GM12878 (cell line): ENCODE measurements at regions of chrX and their contacts with region 1.

Region 1: GRCh38 chrX:132226169-132226568 is 6.9 kb upstream of the RAP2C start:
- DNase-seq: no peak
- ATAC-seq: no peak
- H3K4me3 ChIP-seq: no peak overlapping the region
- H3K27ac ChIP-seq: no peak overlapping the region
- H3K4me1 ChIP-seq: no peaks in the 10 kb centered on the region
- H3K27me3 ChIP-seq: no peaks in the 10 kb centered on the region
- CTCF ChIP-seq: peak in 1 of 3 experiments; percentile 37; a peak in 2 of 6 replicates
- EP300 ChIP-seq: no peak
- POLR2A ChIP-seq: no peak
- RAD21 ChIP-seq: peak; percentile 75

Region 2: GRCh38 chrX:131854581-131854980 is 371.6 kb before region 1 on chrX:
- CTCF ChIA-PET with region 1: interaction called, 25 read pairs
- POLR2A ChIA-PET with region 1: no interaction called
- RAD21 ChIA-PET with region 1: no interaction called
- SMC1A ChIA-PET with region 1: interaction called, 3 read pairs
- in situ Hi-C with region 1: loop called (anchors 10 kb)
- intact Hi-C with region 1: no loop called
- DNase-seq: no peak
- ATAC-seq: no peak
- H3K4me3 ChIP-seq: no peak overlapping the region
- H3K27ac ChIP-seq: no peak overlapping the region
- H3K4me1 ChIP-seq: no peaks in the 10 kb centered on the region
- H3K27me3 ChIP-seq: no peaks in the 10 kb centered on the region
- CTCF ChIP-seq: peak; percentile 6 to 31 (median 10); a peak in 2 of 6 replicates
- EP300 ChIP-seq: no peak
- POLR2A ChIP-seq: no peak
- RAD21 ChIP-seq: peak; percentile 51

Region 3: GRCh38 chrX:132333351-132333750 is 107.2 kb after region 1 on chrX:
- CTCF ChIA-PET with region 1: no interaction called
- POLR2A ChIA-PET with region 1: no interaction called
- RAD21 ChIA-PET with region 1: no interaction called
- SMC1A ChIA-PET with region 1: no interaction called
- in situ Hi-C with region 1: no loop called
- intact Hi-C with region 1: no loop called
- DNase-seq: no peak
- ATAC-seq: peak; percentile 66
- H3K4me3 ChIP-seq: no peak overlapping the region
- H3K27ac ChIP-seq: no peak overlapping the region; the same call in 1 of the 2 replicates
- H3K4me1 ChIP-seq: no peaks in the 10 kb centered on the region
- H3K27me3 ChIP-seq: no peaks in the 10 kb centered on the region
- CTCF ChIP-seq: no peak
- EP300 ChIP-seq: no peak
- POLR2A ChIP-seq: no peak
- RAD21 ChIP-seq: no peak

Region 4: DNA sequence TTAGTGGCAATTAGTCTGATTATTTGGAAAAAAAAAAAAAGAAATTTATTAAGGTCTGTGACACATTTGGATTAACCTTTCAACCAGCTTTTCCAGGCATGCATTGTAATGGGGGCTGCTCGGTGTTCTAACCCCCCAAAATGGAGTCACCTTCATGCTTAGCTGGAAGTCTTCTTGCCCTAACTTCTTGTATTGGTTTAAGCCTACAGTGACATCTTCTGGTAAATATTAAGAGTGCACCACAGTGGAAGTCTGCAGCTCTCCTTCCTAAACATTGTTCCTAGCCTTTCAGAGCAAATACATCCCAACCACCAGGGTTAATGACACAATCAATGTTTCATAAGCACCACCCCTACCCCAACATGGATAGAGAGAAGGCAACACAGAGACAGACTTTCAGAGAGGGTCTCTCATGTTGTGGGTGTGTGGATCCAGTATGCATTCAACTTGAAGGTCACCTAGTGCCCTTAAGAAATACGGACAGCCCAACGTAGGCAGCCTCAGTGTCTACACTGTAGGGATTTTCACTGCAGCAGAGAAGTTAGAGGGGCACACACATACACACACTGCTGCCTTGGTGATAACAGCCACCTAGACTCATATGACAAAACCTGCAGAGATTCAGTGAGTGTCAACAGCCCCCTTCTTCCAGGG is 405.5 kb after region 1 on chrX:
- CTCF ChIA-PET with region 1: interaction called, 9 read pairs
- POLR2A ChIA-PET with region 1: interaction called, 3 read pairs
- RAD21 ChIA-PET with region 1: interaction called, 9 read pairs
- SMC1A ChIA-PET with region 1: interaction called, 7 read pairs
- in situ Hi-C with region 1: no loop called
- intact Hi-C with region 1: loop called (anchors 5 kb)
- DNase-seq: no peak
- ATAC-seq: peak; percentile 80
- H3K4me3 ChIP-seq: no peak overlapping the region
- H3K27ac ChIP-seq: no peak overlapping the region
- H3K4me1 ChIP-seq: no peaks in the 10 kb centered on the region
- H3K27me3 ChIP-seq: no peaks in the 10 kb centered on the region
- CTCF ChIP-seq: peak; percentile 51 to 60 (median 58); a peak in 5 of 6 replicates
- EP300 ChIP-seq: no peak
- POLR2A ChIP-seq: no peak
- RAD21 ChIP-seq: peak; percentile 69